ENCODE measurements at regions of chr14 and their contacts with region 1.

Region 1: GRCh38 chr14:45134051-45134958 is at the start of gene FKBP3:
- DNase-seq: peak; percentile 99
- H3K4me3 ChIP-seq: peak within 1 kb of the TSS; percentile 49 to 55
- H3K27ac ChIP-seq: peak within 1 kb of the TSS; percentile 79 to 81
- H3K4me1 ChIP-seq: no peaks in the 10 kb centered on the region
- H3K27me3 ChIP-seq: no peaks in the 10 kb centered on the region
- CTCF ChIP-seq: peak in 3 of 4 experiments; percentile 5 to 34 (median 29)
- POLR2A ChIP-seq: peak; percentile 65
- total RNA-seq, gene FKBP3: 40.4 to 46.7 TPM

Region 2: GRCh38 chr14:44897045-44897844 is 237.1 kb before region 1 on chr14:
- intact Hi-C with region 1: loop called (anchors 2 kb)
- DNase-seq: peak; percentile 99
- H3K4me3 ChIP-seq: peak overlapping the region; percentile 91
- H3K27ac ChIP-seq: peak overlapping the region; percentile 99 to 100
- H3K4me1 ChIP-seq: no peaks in the 10 kb centered on the region
- H3K27me3 ChIP-seq: no peaks in the 10 kb centered on the region
- CTCF ChIP-seq: no peak
- POLR2A ChIP-seq: peak; percentile 61

Region 3: GRCh38 chr14:44912041-44912869 is 222.1 kb before region 1 on chr14:
- intact Hi-C with region 1: loop called (anchors 5 kb)
- DNase-seq: no peak
- H3K4me3 ChIP-seq: peak overlapping the region; percentile 34 to 42
- H3K27ac ChIP-seq: no peak overlapping the region
- H3K4me1 ChIP-seq: no peaks in the 10 kb centered on the region
- H3K27me3 ChIP-seq: no peaks in the 10 kb centered on the region
- CTCF ChIP-seq: no peak
- POLR2A ChIP-seq: no peak

Region 4: DNA sequence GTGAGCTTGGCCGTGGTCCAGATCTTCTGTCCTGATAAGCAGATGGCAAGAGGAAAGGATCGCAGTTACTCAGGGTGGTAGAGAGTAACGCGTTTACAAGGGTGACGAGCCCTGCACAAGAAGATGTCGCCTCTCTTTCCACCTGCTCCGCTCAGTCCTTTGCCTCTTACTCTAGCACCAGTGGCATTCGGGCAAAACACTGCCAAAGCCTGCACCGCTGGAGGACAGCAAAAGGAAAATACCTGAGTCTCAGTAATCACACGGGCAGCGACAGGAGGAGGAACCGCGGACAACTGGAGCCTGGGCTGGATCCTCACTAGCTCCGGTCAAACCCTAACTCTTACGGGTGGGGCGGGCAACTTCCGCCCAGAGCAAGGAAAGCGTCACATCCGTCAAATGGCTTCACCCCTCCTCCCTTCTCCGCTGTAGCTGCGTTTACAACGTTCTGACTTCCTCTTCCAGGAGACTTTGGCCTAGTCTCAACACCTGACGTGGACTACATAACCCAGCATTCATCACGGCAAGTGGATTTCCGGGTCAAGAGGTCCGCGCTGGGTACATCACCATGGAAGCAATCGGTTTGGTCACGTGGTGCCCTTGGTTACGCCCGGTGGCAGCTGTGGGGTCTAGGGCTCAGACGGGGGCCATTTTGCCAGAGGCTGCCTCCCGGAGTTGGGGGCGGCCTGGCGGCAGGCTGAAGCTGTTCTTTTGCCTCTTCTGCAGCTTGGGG is 172.5 kb before region 1 on chr14 and contains the starts of genes KLHL28 and TOGARAM1:
- intact Hi-C with region 1: loop called (anchors 2 kb)
- DNase-seq: peak; percentile 99
- H3K4me3 ChIP-seq: peak within 1 kb of the TSS; percentile 69 to 78
- H3K27ac ChIP-seq: peak within 1 kb of the TSS; percentile 90 to 92
- H3K4me1 ChIP-seq: peaks cover 6% of the 10 kb centered on the region
- H3K27me3 ChIP-seq: no peaks in the 10 kb centered on the region
- CTCF ChIP-seq: peak in 1 of 4 experiments; percentile 22
- POLR2A ChIP-seq: peak; percentile 83
- total RNA-seq, gene KLHL28: 7.4 to 9.7 TPM
- total RNA-seq, gene TOGARAM1: 17.9 to 26.8 TPM

Region 5: DNA sequence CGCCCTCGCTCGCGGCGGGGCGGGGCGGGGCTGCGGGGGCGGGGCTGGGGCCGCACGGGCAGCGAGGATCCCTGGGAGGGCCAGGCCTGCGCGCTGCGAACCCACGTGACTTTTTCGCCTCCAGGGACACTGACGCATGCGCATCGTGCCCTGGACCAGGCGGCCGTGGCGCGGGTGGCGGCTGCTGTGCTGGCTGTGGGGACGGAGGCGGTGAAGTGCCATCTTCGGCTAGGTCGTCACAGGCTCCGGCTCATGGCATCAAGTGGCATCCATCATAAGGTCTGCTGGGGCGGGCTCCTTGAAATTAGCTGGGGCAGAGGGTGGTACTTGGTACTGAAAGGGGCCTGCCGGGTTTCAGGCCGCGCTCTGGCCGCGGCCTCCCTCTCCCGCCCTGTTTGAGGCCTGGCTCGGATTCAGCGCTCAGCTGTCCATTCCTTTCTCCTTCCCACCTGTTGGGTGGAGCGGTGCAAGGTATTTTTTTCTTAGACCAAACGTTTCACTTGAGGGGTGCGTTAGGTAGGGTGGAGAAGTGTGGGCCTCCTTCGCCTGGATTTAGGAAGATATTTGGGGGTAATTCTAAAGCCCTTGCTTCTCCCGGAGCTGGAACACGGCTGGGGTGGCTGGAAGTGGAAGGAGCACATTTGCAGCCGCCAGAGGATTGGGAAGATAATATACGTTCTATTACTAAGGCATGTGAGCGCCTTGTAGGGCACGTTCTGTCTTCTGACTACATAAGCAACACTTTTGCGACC is 50.2 kb before region 1 on chr14 and contains the start of gene PRPF39:
- intact Hi-C with region 1: loop called (anchors 10 kb)
- DNase-seq: peak; percentile 93
- H3K4me3 ChIP-seq: peak within 1 kb of the TSS; percentile 55 to 71
- H3K27ac ChIP-seq: peak within 1 kb of the TSS; percentile 82 to 87
- H3K4me1 ChIP-seq: peaks cover 6% of the 10 kb centered on the region
- H3K27me3 ChIP-seq: no peaks in the 10 kb centered on the region
- CTCF ChIP-seq: peak in 2 of 4 experiments; percentile 2
- POLR2A ChIP-seq: peak; percentile 89
- total RNA-seq, gene PRPF39: 30.3 to 47.1 TPM

Region 6: DNA sequence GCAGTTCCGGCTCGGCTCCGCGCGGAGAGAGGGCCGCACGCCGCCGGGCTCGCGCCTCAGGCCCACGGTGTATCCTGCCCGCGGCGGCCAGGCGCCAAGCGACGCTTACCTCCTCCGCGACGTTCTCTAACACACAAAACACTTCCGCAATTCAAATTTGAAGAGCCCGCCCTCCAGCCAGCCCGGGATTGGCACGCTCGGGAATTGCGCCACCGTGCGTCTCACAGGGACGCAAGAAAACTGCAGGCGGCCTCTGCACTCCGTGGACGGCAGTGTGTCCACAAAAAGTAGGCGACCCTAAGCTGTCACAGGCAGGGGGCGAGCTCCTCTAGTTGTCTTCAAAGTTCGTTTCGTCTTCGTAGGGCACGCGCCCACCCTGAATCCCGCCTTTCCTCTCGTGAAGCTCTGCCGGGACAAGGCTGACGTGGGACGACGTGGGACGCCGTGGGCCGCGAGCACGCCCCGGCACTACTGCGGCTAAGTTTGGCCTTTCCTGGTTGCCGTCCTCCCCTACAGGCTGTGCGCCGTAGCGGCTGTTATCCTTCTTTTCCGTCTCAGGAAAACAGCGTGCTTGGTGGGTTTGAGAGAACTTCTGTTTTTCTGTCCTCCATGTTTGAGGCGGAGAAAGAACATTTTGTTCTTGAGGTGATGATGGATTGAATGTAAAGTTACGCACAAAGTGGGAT is 118.9 kb after region 1 on chr14 and contains the start of gene MIS18BP1:
- intact Hi-C with region 1: loop called (anchors 5 kb)
- DNase-seq: peak; percentile 96
- H3K4me3 ChIP-seq: peak within 1 kb of the TSS; percentile 58 to 79
- H3K27ac ChIP-seq: peak within 1 kb of the TSS; percentile 86 to 94
- H3K4me1 ChIP-seq: no peaks in the 10 kb centered on the region
- H3K27me3 ChIP-seq: no peaks in the 10 kb centered on the region
- CTCF ChIP-seq: peak; percentile 71 to 86 (median 78)
- POLR2A ChIP-seq: peak; percentile 75
- total RNA-seq, gene MIS18BP1: 23.3 to 46.7 TPM

Measured in prostate gland (tissue), 2 donors.